Heart right ventricle (tissue), 16 donors: ENCODE measurements at regions of chr18 and their contacts with region 1.

Region 1: GRCh38 chr18:55440988-55441387 is 147.0 kb downstream of the TCF4 start:
- DNase-seq: no peak
- ATAC-seq: no peak
- H3K4me3 ChIP-seq: no peak overlapping the region
- H3K27ac ChIP-seq: no peak overlapping the region
- H3K4me1 ChIP-seq: peaks cover 0 to 48% (median 6%) of the 10 kb centered on the region in 9 donors
- H3K27me3 ChIP-seq: no peaks in the 10 kb centered on the region
- CTCF ChIP-seq: no peak

Region 2: GRCh38 chr18:55384551-55385275 is 56.3 kb before region 1 on chr18:
- intact Hi-C with region 1: loop called in 1 of 10 experiments (anchors 1 kb)
- DNase-seq: no peak
- ATAC-seq: no peak
- H3K4me3 ChIP-seq: no peak overlapping the region
- H3K27ac ChIP-seq: peak overlapping the region in 2 of 10 donors; percentile 13 to 89
- H3K4me1 ChIP-seq: peaks cover 4 to 50% (median 28%) of the 10 kb centered on the region in 9 donors
- H3K27me3 ChIP-seq: no peaks in the 10 kb centered on the region
- CTCF ChIP-seq: peak in 8 of 9 donors; percentile 15 to 63 (median 47)